Activated CD8-positive, alpha-beta T cell treated with anti-CD3 and anti-CD28 coated beads, Interleukin-2, amount 10 ng/mL, durations not matched to agents 7 days and 5 days (primary cell): ENCODE measurements at regions of chr22 and their contacts with region 1.

Region 1: DNA sequence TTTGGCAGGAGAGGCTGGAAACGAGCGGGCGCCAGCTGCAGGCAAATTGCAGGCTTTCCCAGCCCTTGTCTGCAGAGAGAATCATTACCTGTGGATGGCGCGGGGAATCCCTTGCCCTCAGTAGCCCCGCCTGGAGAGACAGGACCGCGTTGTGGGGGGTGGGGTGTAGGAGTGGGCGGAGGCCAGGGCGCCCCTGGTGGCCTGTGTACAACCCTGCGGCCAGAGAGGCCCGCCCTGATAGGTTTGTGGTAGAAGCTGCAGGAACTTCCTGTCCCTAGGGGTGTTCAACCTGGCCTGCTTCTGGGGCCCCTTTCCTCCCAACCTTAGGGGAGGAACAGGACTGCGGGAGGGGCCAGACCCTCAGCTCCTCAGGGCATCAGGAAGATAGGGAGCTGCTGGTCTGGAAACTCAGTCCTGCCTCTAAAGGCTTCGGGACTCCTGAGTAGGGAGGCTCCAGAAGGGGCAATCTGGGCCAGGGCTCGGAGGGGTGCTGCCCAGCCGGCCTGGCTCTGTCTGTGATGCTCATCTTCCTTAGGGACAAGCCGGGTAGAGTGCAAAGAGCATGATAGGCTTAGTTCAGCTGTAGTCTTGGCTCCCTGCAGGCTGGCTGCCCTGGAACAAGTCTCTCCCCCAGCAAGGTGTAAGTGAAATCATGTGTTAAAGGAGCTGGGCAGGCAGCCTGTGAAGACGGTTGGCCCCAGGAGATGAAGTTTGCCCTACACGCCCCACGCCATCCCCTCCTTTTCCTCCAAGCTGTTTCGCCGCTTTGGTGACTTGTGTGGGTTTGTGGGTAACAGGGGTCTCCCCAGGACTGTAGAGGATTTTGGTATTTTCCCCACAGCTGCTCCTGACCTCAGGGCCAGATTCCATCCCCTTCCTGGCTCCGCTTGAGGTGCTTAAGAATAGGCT is 24.1 kb upstream of the SUSD2 start:
- DNase-seq: peak; percentile 97
- ATAC-seq: peak; percentile 80
- H3K4me3 Mint-ChIP-seq: peak overlapping the region; percentile 94
- H3K27ac Mint-ChIP-seq: peak overlapping the region; percentile 95
- H3K4me1 Mint-ChIP-seq: peaks cover 71% of the 10 kb centered on the region
- H3K27me3 Mint-ChIP-seq: no peaks in the 10 kb centered on the region

Region 2: DNA sequence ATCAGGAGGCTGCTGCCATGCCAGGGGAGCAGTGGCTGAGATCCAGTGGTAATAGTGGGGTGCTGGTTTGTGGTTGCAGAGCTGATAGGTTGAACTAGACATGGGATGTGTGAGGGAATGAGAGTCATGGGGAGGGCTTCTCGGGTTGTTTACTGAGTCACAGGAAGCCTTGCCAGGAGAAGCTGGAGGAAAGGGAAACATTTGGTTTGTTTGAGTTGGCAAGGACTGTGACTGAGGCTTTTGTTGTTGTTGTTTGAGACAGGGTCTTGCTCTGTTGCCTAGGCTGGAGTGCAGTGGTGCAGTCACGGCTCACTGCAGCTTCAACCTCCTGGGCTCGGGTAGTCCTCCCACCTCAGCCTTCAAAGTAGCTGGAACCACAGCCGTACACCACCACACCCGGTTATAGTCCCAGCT is 96.8 kb before region 1 on chr22:
- CTCF ChIA-PET with region 1: interaction called, 17 read pairs
- POLR2A ChIA-PET with region 1: no interaction called
- DNase-seq: peak; percentile 31
- ATAC-seq: peak; percentile 72
- H3K4me3 Mint-ChIP-seq: peak overlapping the region; percentile 2
- H3K27ac Mint-ChIP-seq: peak overlapping the region; percentile 88
- H3K4me1 Mint-ChIP-seq: peaks cover 15% of the 10 kb centered on the region
- H3K27me3 Mint-ChIP-seq: no peaks in the 10 kb centered on the region

Region 3: GRCh38 chr22:24125941-24126340 is 31.2 kb before region 1 on chr22:
- CTCF ChIA-PET with region 1: interaction called, 12 read pairs
- POLR2A ChIA-PET with region 1: interaction called, 8 read pairs
- DNase-seq: no peak
- ATAC-seq: no peak
- H3K4me3 Mint-ChIP-seq: no peak overlapping the region
- H3K27ac Mint-ChIP-seq: peak overlapping the region; percentile 27
- H3K4me1 Mint-ChIP-seq: peaks cover 7% of the 10 kb centered on the region
- H3K27me3 Mint-ChIP-seq: no peaks in the 10 kb centered on the region

Region 4: GRCh38 chr22:24140357-24140756 is 16.8 kb before region 1 on chr22:
- CTCF ChIA-PET with region 1: interaction called, 132 read pairs
- POLR2A ChIA-PET with region 1: interaction called, 30 read pairs
- DNase-seq: no peak
- ATAC-seq: no peak
- H3K4me3 Mint-ChIP-seq: no peak overlapping the region
- H3K27ac Mint-ChIP-seq: peak overlapping the region; percentile 21
- H3K4me1 Mint-ChIP-seq: peaks cover 66% of the 10 kb centered on the region
- H3K27me3 Mint-ChIP-seq: no peaks in the 10 kb centered on the region

Region 5: DNA sequence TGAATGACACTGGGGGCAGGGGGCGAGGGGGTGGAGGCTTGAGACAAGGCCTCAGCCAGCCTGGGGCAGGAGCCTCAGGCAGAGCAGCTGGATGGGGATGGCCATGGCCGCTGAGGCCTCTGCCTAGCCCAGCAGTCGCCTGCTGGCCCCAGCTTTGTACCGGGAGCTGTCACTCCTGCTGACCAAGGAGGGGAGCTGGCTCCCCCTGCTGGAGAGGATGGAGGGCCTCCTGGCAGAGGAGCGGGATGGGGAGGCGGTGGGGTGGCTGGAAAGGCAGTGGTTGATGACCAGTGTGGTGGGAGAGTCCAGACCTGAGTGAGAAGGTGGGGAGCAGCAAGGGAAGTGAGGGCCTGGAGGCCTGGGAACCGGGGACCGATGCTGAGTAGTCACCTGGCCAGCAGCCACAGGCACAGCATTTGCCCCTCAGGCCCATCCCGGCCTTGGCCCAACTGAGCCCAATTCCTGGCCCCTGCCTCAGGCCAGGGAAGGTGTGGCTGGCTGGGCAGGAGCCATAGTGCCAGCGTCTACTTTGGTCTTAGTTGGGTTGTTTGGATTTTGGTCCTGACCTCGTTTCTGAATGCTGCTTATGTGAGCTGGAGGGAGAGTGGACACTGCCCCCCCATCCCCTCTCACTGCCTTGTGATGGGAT is 18.1 kb after region 1 on chr22:
- CTCF ChIA-PET with region 1: interaction called, 41 read pairs
- POLR2A ChIA-PET with region 1: interaction called, 7 read pairs
- DNase-seq: peak; percentile 70
- ATAC-seq: peak; percentile 56
- H3K4me3 Mint-ChIP-seq: no peak overlapping the region
- H3K27ac Mint-ChIP-seq: no peak overlapping the region
- H3K4me1 Mint-ChIP-seq: no peaks in the 10 kb centered on the region
- H3K27me3 Mint-ChIP-seq: no peaks in the 10 kb centered on the region

Region 6: GRCh38 chr22:24244101-24244787 is 87.1 kb after region 1 on chr22:
- CTCF ChIA-PET with region 1: interaction called, 25 read pairs
- POLR2A ChIA-PET with region 1: no interaction called
- DNase-seq: no peak
- ATAC-seq: no peak
- H3K4me3 Mint-ChIP-seq: no peak overlapping the region
- H3K27ac Mint-ChIP-seq: peak overlapping the region; percentile 82
- H3K4me1 Mint-ChIP-seq: peaks cover 55% of the 10 kb centered on the region
- H3K27me3 Mint-ChIP-seq: no peaks in the 10 kb centered on the region